Thyroid gland (tissue), 4 donors: ENCODE measurements at regions of chr17 and their contacts with region 1.

Region 1: DNA sequence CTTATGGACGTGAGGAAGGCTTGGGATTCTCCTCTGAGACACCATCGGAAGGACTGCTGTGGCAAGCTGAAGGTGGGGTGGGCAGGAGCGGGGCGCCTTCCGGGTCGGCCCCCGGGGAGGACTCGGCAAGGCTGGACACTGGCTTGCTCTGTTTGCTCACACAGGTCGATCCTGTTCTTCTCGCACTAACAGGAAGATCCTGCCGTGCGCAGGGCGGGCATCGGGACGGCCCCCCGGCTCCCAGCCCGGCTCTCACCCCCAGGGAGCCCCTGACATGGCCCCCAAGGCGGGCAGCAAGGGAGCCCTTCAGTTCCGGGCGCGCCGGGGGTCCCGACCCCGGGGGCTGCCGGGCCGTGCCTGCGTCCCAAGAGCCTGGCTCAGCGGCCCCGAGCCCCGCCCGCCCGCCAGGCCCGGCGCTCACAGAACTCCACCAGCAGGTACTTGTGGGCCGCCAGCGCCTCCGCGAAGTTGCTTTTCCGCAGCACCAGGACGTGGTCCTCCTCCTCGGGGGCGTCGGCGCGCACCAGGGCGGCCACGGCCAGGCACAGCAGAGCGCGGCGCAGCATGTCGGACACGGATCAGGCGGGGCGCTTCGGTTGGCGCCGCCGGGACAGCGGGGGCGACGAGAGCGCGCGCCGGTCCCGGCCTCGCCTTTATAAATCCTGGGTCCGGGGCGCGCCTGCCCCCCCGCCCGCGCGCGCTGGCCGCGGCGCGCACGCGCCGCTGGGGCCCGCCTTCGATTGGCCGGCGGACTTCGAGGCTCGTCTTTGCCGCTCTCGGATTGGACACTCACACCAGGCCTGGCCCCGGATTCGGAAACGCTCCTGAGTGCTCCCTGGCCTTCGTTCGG is at the start of gene P4HB:
- DNase-seq: no peak
- H3K4me3 ChIP-seq: peak within 1 kb of the TSS; percentile 78 to 99 (median 85)
- H3K27ac ChIP-seq: peak within 1 kb of the TSS; percentile 81 to 89 (median 83)
- H3K4me1 ChIP-seq: peaks cover 20 to 34% of the 10 kb centered on the region in 2 donors
- H3K27me3 ChIP-seq: no peaks in the 10 kb centered on the region
- CTCF ChIP-seq: no peak
- POLR2A ChIP-seq: peak in 1 of 2 donors; percentile 85
- total RNA-seq, gene P4HB: 548 to 1,124 (median 681) TPM

Region 2: DNA sequence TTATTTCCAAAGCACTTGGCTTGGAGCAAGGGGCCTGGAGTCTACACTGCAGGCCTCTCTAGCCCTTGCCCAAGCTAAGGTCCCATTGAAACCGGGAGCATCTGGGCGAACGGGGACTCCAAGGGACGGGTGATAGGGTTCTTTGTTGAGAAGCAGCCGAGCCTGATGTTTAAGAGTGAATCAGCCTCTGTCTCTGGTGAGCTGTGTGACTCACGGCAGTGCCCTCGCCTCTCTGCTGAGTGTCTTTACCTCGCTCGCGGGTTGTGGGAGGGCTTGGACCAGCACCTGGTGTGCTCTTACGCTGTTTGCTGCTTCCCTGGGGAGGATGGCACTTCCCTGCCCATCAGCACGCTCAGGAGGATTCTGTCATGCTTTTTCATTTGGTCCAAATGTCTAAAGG is 175.0 kb before region 1 on chr17:
- intact Hi-C with region 1: no loop called
- DNase-seq: no peak
- H3K4me3 ChIP-seq: peak overlapping the region in 1 of 3 donors; percentile 72
- H3K27ac ChIP-seq: no peak overlapping the region
- H3K4me1 ChIP-seq: peaks cover 19 to 26% of the 10 kb centered on the region in 2 donors
- H3K27me3 ChIP-seq: no peaks in the 10 kb centered on the region
- CTCF ChIP-seq: no peak
- POLR2A ChIP-seq: no peak

Region 3: GRCh38 chr17:81711814-81712467 is 148.2 kb before region 1 on chr17 and contains the start of gene SLC25A10:
- intact Hi-C with region 1: loop called (anchors 5 kb)
- DNase-seq: peak; percentile 89 to 90
- H3K4me3 ChIP-seq: peak within 1 kb of the TSS; percentile 42 to 78 (median 65)
- H3K27ac ChIP-seq: peak within 1 kb of the TSS in 1 of 3 donors; percentile 59
- H3K4me1 ChIP-seq: peaks cover 23 to 27% of the 10 kb centered on the region in 2 donors
- H3K27me3 ChIP-seq: no peaks in the 10 kb centered on the region
- CTCF ChIP-seq: peak in 2 of 6 experiments; percentile 8 to 15
- POLR2A ChIP-seq: peak in 1 of 2 donors; percentile 53
- total RNA-seq, gene SLC25A10: 8.9 to 26.3 (median 20.8) TPM

Region 4: GRCh38 chr17:81833160-81833920 is 26.8 kb before region 1 on chr17 and contains the start of gene MCRIP1:
- intact Hi-C with region 1: loop called (anchors 2 kb)
- DNase-seq: peak; percentile 96
- H3K4me3 ChIP-seq: peak within 1 kb of the TSS; percentile 47 to 84 (median 80)
- H3K27ac ChIP-seq: peak within 1 kb of the TSS; percentile 84 to 91 (median 91)
- H3K4me1 ChIP-seq: peaks cover 16 to 28% of the 10 kb centered on the region in 2 donors
- H3K27me3 ChIP-seq: no peaks in the 10 kb centered on the region
- CTCF ChIP-seq: peak in 1 of 6 experiments; percentile 22
- POLR2A ChIP-seq: peak; percentile 64 to 89
- total RNA-seq, gene MCRIP1: 55.2 to 88.6 (median 83.7) TPM